H1 (cell line): ENCODE measurements at regions of chr3 and their contacts with region 1.

Region 1: GRCh38 chr3:181176601-181177000 is 187.1 kb upstream of the DNAJC19 start:
- DNase-seq: no peak
- H3K4me3 ChIP-seq: no peak overlapping the region
- H3K27ac ChIP-seq: no peak overlapping the region
- H3K4me1 ChIP-seq: no peaks in the 10 kb centered on the region; a peak in 1 of 7 replicates
- H3K27me3 ChIP-seq: no peaks in the 10 kb centered on the region
- CTCF ChIP-seq: peak in 2 of 3 experiments; percentile 57 to 65; a peak in 3 of 4 replicates
- EP300 ChIP-seq: no peak
- POLR2A ChIP-seq: no peak
- RAD21 ChIP-seq: peak; percentile 74 to 77

Region 2: GRCh38 chr3:180646187-180646790 is 530.3 kb before region 1 on chr3:
- CTCF ChIA-PET with region 1: no interaction called
- POLR2A ChIA-PET with region 1: no interaction called
- DNase-seq: no peak
- H3K4me3 ChIP-seq: no peak overlapping the region
- H3K27ac ChIP-seq: no peak overlapping the region
- H3K4me1 ChIP-seq: no peaks in the 10 kb centered on the region
- H3K27me3 ChIP-seq: no peaks in the 10 kb centered on the region
- CTCF ChIP-seq: peak in 2 of 3 experiments; percentile 18 to 36; a peak in 2 of 4 replicates
- EP300 ChIP-seq: no peak
- POLR2A ChIP-seq: no peak
- RAD21 ChIP-seq: peak; percentile 11 to 23; a peak in 2 of 4 replicates

Region 3: GRCh38 chr3:181009225-181009624 is 167.4 kb before region 1 on chr3:
- CTCF ChIA-PET with region 1: no interaction called
- POLR2A ChIA-PET with region 1: no interaction called
- DNase-seq: no peak
- H3K4me3 ChIP-seq: no peak overlapping the region
- H3K27ac ChIP-seq: no peak overlapping the region
- H3K4me1 ChIP-seq: peaks cover 0 to 6% (median 2%) of the 10 kb centered on the region in 4 experiments; a peak in 1 of 7 replicates
- H3K27me3 ChIP-seq: no peaks in the 10 kb centered on the region
- CTCF ChIP-seq: no peak
- EP300 ChIP-seq: no peak
- POLR2A ChIP-seq: no peak
- RAD21 ChIP-seq: no peak

Region 4: GRCh38 chr3:181086011-181086410 is 90.6 kb before region 1 on chr3:
- CTCF ChIA-PET with region 1: no interaction called
- POLR2A ChIA-PET with region 1: no interaction called
- DNase-seq: no peak
- H3K4me3 ChIP-seq: no peak overlapping the region
- H3K27ac ChIP-seq: no peak overlapping the region
- H3K4me1 ChIP-seq: no peaks in the 10 kb centered on the region
- H3K27me3 ChIP-seq: no peaks in the 10 kb centered on the region
- CTCF ChIP-seq: no peak
- EP300 ChIP-seq: no peak
- POLR2A ChIP-seq: no peak
- RAD21 ChIP-seq: no peak

Region 5: GRCh38 chr3:181103605-181104004 is 73.0 kb before region 1 on chr3:
- CTCF ChIA-PET with region 1: interaction called, 42 read pairs
- POLR2A ChIA-PET with region 1: no interaction called
- DNase-seq: peak in 1 of 2 experiments; percentile 17
- H3K4me3 ChIP-seq: no peak overlapping the region
- H3K27ac ChIP-seq: no peak overlapping the region
- H3K4me1 ChIP-seq: no peaks in the 10 kb centered on the region
- H3K27me3 ChIP-seq: no peaks in the 10 kb centered on the region
- CTCF ChIP-seq: peak in 2 of 3 experiments; percentile 60 to 73; a peak in 3 of 4 replicates
- EP300 ChIP-seq: no peak
- POLR2A ChIP-seq: no peak
- RAD21 ChIP-seq: peak; percentile 90 to 92

Region 6: DNA sequence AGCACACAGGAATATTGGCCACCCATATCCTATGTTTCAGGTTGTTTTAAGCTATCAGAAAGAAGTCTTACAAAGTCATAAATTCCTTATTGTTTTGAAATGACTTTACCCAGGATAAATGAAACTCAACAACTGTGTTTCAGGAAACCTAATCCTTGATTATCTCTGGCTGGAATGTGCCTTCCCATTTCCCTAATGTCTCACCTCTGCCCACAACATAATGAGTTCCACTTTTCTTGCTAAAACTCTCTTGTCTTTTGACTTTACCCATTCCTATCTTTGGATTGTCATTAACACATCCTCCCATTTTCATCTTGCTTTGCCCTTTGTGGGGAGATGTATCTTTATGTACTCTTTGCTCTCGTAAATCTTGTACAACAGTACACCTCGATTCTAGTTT is 13.0 kb after region 1 on chr3:
- CTCF ChIA-PET with region 1: interaction called, 10 read pairs
- POLR2A ChIA-PET with region 1: no interaction called
- DNase-seq: no peak
- H3K4me3 ChIP-seq: no peak overlapping the region
- H3K27ac ChIP-seq: no peak overlapping the region
- H3K4me1 ChIP-seq: no peaks in the 10 kb centered on the region
- H3K27me3 ChIP-seq: no peaks in the 10 kb centered on the region
- CTCF ChIP-seq: no peak
- EP300 ChIP-seq: no peak
- POLR2A ChIP-seq: no peak
- RAD21 ChIP-seq: no peak